ENCODE measurements at regions of chr1 and their contacts with region 1.

Region 1: DNA sequence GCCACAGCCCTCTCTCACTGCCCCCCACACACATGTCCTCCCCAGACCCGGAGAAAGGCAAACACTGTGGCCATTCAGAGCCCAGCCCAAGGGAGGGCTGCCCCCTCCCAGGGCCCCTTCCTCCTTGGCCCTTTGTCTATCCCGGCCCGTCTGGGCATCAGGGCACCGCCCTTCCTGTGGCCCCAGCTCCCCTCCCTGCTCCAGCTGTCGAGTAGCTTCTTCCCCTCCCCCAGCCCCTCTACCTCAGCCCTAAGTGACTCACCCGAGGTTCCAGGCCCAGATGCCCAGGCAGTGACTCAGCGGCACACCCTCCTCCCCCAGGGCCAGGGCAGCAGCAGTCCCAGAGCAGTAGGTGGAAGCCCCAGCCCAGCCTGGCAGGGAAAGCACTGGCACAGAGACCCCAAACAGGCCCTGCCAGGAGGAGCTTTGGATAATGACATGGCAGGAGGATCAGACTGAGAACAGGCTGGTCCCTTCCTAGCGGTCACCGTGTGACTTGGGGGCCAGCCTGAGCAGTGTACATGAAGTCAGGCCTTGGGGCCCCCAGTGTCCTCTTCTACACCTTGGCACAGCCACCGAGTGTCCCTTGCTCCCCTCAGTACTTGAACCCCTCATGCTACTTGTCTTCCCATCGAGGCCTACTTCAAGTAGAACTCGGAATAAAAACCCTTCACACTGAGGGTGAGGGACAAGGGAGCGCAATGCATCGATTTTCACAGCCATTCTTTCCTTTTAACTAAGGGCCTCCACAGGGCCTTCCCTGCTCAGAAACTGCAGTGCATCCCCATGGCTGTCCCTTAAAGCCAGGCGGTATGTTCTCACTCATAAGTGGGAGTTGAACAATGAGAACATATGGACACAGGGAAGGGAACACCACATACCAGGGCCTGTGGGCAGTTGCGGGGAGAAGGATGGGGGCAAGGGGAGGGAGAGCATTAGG is 1.1 kb upstream of the S100A2 start:
- DNase-seq: peak; percentile 97
- ATAC-seq: peak; percentile 86 to 93

Region 2: DNA sequence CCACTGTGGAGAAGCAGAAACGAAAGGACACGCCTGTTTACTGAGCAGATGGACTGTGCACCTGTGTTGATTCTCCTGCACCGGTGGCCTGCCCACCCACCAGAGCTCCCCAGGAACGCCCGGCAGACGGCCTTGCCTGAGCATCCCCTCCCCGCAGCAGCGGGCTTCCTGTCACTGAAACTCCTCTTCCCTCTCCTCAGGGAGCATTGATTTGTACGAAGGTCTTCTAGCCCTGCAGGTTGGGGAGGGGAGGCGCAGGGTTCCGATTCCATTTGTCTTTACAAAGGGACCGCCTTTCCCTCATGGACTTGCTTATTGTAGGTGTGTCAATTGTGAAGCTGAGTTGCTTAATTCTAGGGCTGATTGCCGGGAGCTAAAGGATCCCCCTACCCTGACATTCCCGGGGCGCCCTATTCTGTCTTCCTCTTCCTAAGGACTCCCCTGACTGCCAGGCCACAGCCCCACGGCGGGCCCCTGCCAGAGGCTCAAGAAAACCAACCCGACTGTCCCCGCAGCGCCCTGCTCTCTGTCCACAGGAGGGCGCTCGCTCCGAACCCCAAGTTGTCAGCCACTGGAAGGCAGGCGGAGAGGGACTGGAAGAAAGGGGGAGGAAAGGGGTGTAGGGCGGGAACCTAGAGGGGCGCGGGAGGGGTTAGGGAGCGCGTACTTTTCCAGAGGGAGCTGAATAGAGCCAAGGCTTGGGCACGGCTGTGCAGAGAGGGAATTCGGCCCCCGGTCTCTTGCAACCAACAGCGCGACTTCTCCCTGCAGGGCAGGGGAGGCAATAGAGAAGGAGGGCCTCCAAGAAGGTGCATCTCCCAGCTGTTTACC is 33.7 kb before region 1 on chr1:
- intact Hi-C with region 1: loop called (anchors 2 to 5 kb)
- DNase-seq: peak; percentile 88
- ATAC-seq: peak; percentile 43 to 49